WTC11 (cell line): ENCODE measurements at regions of chr19 and their contacts with region 1.

Region 1: DNA sequence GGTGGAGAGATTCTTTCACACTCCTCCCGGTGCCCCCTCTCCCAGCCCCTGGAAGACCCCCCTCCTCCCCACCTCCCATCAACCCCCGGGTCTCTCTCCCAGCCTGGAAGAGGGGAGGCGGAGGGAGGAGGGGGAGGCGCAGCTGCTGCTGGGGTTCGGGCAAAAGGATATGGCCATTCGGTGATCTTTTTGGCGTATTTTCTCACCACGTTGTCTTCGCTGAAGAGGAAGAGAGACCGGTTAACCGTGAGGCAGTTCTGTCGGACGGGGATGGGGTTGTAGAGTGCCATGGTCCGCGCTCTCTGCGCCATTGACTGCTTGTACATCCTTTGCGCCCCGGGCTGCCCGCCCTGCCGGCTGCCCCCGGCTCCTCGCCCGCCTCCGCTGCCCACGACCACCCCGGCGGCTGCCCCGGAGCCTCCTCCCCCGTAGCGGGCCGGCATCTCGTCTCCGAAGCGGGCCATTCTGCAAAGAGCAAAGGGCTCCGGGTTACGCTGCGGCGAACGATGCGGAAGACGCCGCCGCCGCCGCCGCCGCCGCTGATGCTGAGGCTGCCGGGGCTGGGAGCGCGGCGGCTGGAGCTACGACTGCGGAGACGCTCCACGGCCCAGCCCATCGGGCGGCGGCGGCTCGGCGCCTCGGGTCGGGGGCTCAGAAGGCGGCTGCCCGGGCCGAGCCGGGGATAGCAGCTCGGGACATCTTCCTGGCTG is 363 bp downstream of the CACNA1A start:
- DNase-seq: peak; percentile 53
- ATAC-seq: peak; percentile 62
- H3K4me3 Mint-ChIP-seq: peak overlapping the region; percentile 87
- H3K27ac Mint-ChIP-seq: no peak overlapping the region
- H3K4me1 Mint-ChIP-seq: peaks cover 38% of the 10 kb centered on the region
- H3K27me3 Mint-ChIP-seq: peaks cover 28% of the 10 kb centered on the region
- CTCF ChIP-seq: no peak

Region 2: DNA sequence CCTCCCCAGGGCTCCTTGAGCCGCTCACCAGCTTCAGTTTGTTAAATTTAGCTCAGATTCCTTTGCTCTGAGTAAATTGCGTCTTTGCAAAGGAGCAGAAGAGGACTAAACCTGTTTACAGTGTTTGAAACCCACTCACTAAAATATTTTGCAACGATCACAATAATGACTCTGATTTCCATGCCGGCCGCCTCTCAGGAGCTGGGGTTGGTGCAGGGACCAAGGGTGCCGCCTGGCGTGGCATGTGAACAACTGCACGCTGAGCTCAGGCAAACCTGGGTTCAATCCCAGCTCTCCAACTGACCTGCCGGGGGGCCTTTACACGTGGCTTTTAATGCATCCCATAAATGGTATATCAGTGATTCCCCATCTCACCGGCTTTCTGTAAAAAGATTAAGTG is 69.0 kb after region 1 on chr19:
- CTCF ChIA-PET with region 1: interaction called, 20 read pairs
- POLR2A ChIA-PET with region 1: no interaction called
- DNase-seq: peak; percentile 47
- ATAC-seq: peak; percentile 53; the same call in 1 of the 2 replicates
- H3K4me3 Mint-ChIP-seq: no peak overlapping the region
- H3K27ac Mint-ChIP-seq: no peak overlapping the region
- H3K4me1 Mint-ChIP-seq: peaks cover 3% of the 10 kb centered on the region; the same call in 1 of the 2 replicates
- H3K27me3 Mint-ChIP-seq: peaks cover 10% of the 10 kb centered on the region
- CTCF ChIP-seq: no peak